ENCODE measurements at regions of chr17 and their contacts with region 1.

Region 1: GRCh38 chr17:40522250-40522952 is 21.0 kb upstream of the TNS4 start:
- DNase-seq: peak in 1 of 5 donors; percentile 20
- ATAC-seq: peak in 1 of 4 donors; percentile 60
- H3K4me3 ChIP-seq: no peak overlapping the region
- H3K27ac ChIP-seq: peak overlapping the region in 1 of 12 donors; percentile 8
- H3K4me1 ChIP-seq: peaks cover 0 to 7% (median 0%) of the 10 kb centered on the region in 12 donors
- H3K27me3 ChIP-seq: no peaks in the 10 kb centered on the region
- CTCF ChIP-seq: no peak
- POLR2A ChIP-seq: no peak

Region 2: DNA sequence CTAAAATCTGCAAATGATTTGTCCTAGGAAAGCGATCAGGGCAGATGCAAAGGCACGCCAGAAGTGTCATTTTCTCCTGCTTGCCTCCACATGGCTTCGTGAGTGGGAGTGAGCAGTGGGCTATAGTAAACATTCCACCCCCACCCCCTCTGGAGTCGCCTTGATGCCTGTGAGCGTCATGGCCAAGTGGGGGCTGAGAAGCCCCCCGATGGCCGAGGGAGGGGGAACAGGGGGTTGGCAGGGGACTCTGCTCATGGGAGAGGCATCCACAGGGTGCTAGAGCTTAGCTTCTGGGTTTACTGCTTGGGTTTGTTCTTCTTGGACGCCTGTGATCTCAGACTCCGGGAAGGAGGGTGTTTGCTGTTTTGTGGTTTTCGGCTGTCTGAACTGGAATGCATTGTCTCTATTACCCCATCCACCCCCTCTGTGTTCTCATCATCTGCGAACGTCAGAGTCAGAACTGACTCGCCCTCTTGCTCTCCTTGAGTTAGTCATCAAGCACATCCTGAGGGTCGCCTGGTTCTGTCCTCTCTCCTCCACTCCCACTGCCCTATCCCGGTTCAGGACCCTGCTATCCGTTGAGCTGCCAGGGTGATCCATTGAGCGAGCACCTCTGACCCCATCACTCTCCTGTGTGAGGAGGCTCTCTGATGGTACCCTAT is 36.4 kb before region 1 on chr17:
- intact Hi-C with region 1: loop called in 2 of 10 experiments (anchors 5 kb)
- DNase-seq: peak in 2 of 5 donors; percentile 45 to 61
- ATAC-seq: peak; percentile 25 to 84 (median 72)
- H3K4me3 ChIP-seq: no peak overlapping the region
- H3K27ac ChIP-seq: peak overlapping the region in 7 of 12 donors; percentile 13 to 82 (median 43)
- H3K4me1 ChIP-seq: peaks cover 0 to 35% (median 0%) of the 10 kb centered on the region in 12 donors
- H3K27me3 ChIP-seq: no peaks in the 10 kb centered on the region
- CTCF ChIP-seq: no peak
- POLR2A ChIP-seq: peak in 1 of 2 donors; percentile 16